Dorsolateral prefrontal cortex (tissue), 120 donors: ENCODE measurements at regions of chr2 and their contacts with region 1.

Region 1: GRCh38 chr2:141498561-141498960 is 632.3 kb downstream of the LRP1B start:
- DNase-seq: no peak
- H3K4me3 ChIP-seq: no peak overlapping the region
- H3K27ac ChIP-seq: no peak overlapping the region
- H3K27me3 ChIP-seq: no peaks in the 10 kb centered on the region
- CTCF ChIP-seq: no peak

Region 2: GRCh38 chr2:141554810-141555209 is 56.2 kb after region 1 on chr2:
- intact Hi-C with region 1: loop called in 1 of 2 experiments (anchors 10 kb)
- DNase-seq: peak in 1 of 10 donors; percentile 17
- H3K4me3 ChIP-seq: no peak overlapping the region
- H3K27ac ChIP-seq: peak overlapping the region in 10 of 59 donors; percentile 1 to 72 (median 24)
- H3K27me3 ChIP-seq: no peaks in the 10 kb centered on the region
- CTCF ChIP-seq: peak; percentile 16 to 81 (median 60)

Region 3: GRCh38 chr2:141618457-141618856 is 119.9 kb after region 1 on chr2:
- intact Hi-C with region 1: no loop called
- DNase-seq: no peak
- H3K4me3 ChIP-seq: no peak overlapping the region
- H3K27ac ChIP-seq: no peak overlapping the region
- H3K27me3 ChIP-seq: no peaks in the 10 kb centered on the region
- CTCF ChIP-seq: no peak